Activated CD4-positive, alpha-beta T cell treated with anti-CD3 and anti-CD28 coated beads for 36 hours (primary cell): ENCODE measurements at regions of chr2 and their contacts with region 1.

Region 1: GRCh38 chr2:169462896-169463695 is 16.2 kb upstream of the BBS5 start:
- DNase-seq: no peak
- ATAC-seq: no peak
- H3K4me3 Mint-ChIP-seq: no peak overlapping the region
- H3K27ac Mint-ChIP-seq: no peak overlapping the region
- H3K4me1 Mint-ChIP-seq: no peaks in the 10 kb centered on the region
- H3K27me3 Mint-ChIP-seq: no peaks in the 10 kb centered on the region

Region 2: GRCh38 chr2:169562519-169562918 is 99.4 kb after region 1 on chr2:
- CTCF ChIA-PET with region 1: no interaction called
- POLR2A ChIA-PET with region 1: no interaction called
- intact Hi-C with region 1: loop called in 1 of 2 experiments (anchors 5 kb)
- DNase-seq: no peak
- ATAC-seq: no peak
- H3K4me3 Mint-ChIP-seq: no peak overlapping the region
- H3K27ac Mint-ChIP-seq: no peak overlapping the region
- H3K4me1 Mint-ChIP-seq: no peaks in the 10 kb centered on the region
- H3K27me3 Mint-ChIP-seq: no peaks in the 10 kb centered on the region